CD14-positive monocyte (primary cell): ENCODE measurements at regions of chr18 and their contacts with region 1.

Region 1: GRCh38 chr18:77054606-77055428 is 77.8 kb downstream of the MBP start:
- DNase-seq: peak; percentile 94
- H3K4me3 ChIP-seq: peak overlapping the region in 2 of 3 experiments; percentile 15 to 42
- H3K4me3 Mint-ChIP-seq: peak overlapping the region; percentile 69 to 82
- H3K27ac ChIP-seq: peak overlapping the region; percentile 93 to 99
- H3K27ac Mint-ChIP-seq: peak overlapping the region; percentile 98 to 100 (median 99)
- H3K4me1 ChIP-seq: peaks cover 68 to 71% of the 10 kb centered on the region in 2 donors
- H3K4me1 Mint-ChIP-seq: peaks cover 58% of the 10 kb centered on the region
- H3K27me3 ChIP-seq: no peaks in the 10 kb centered on the region
- H3K27me3 Mint-ChIP-seq: peaks cover 0 to 2% (median 0%) of the 10 kb centered on the region in 3 donors
- CTCF ChIP-seq: peak; percentile 70

Region 2: DNA sequence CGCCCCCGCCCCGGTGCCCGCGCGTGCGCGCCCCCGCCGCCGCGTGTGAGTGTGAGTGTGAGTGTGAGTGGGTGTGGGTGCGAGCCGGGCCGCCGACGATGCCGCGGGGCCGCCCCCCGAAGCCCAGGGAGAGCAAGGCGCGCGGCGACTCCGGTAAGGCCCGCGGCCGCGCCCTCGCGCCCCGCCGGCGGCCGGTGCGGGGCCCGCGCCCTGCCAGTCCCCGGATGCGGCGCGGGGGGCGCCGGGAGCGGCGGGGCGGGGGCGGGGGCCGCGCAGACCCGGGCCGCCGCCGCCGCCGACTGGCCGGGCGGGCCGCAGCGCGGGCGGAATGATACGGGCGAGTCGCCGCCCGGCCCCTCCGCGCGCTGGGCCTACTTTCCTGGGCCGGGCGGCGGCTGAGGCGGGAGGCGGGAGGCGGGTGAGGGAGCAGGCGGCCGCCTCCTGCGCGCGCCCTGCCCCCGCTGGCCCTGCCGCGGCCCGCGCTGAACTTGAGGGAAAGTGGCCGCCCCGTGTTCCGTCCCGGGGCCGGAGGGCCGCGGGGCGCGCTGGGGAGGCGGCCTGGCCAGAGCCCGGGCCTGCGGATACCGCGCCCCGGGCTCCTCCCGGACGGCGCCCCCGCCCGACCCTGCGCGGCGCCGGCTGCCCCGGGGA is 232.2 kb before region 1 on chr18 and contains the start of gene ZNF236:
- intact Hi-C with region 1: loop called in 1 of 2 experiments (anchors 5 kb)
- DNase-seq: peak; percentile 63 to 77 (median 71)
- H3K4me3 ChIP-seq: peak within 1 kb of the TSS; percentile 85 to 95 (median 89)
- H3K4me3 Mint-ChIP-seq: peak within 1 kb of the TSS; percentile 91 to 95
- H3K27ac ChIP-seq: peak within 1 kb of the TSS; percentile 89 to 93
- H3K27ac Mint-ChIP-seq: peak within 1 kb of the TSS; percentile 91 to 98 (median 95)
- H3K4me1 ChIP-seq: peaks cover 20 to 32% of the 10 kb centered on the region in 2 donors
- H3K4me1 Mint-ChIP-seq: peaks cover 45% of the 10 kb centered on the region
- H3K27me3 ChIP-seq: no peaks in the 10 kb centered on the region
- H3K27me3 Mint-ChIP-seq: peaks cover 0 to 4% (median 0%) of the 10 kb centered on the region in 3 donors
- CTCF ChIP-seq: no peak
- polyA plus RNA-seq, gene ZNF236: 1.7 to 6.5 (median 2.4) TPM

Region 3: DNA sequence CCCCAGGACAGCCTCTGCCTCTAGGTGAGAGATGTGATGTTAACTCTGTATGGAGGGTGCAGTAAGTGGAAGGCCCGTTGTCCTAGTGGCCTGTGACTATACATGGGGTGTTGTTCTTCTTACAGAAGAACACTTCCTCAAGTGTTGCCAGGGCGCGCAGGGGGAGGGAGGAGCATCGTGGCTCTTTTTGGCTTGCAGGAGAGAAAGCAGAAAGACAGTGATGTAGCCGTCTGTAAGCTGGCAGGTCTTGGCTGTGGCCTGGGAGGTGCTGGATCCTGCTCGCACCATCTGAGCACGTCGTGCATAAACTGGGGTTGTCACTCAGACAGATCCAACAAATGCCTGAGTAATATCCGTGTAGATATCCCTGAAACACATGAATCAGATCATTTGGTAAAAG is 188.2 kb before region 1 on chr18:
- intact Hi-C with region 1: no loop called
- DNase-seq: no peak
- H3K4me3 ChIP-seq: no peak overlapping the region
- H3K4me3 Mint-ChIP-seq: no peak overlapping the region
- H3K27ac ChIP-seq: no peak overlapping the region
- H3K27ac Mint-ChIP-seq: peak overlapping the region in 1 of 7 donors; percentile 42
- H3K4me1 ChIP-seq: no peaks in the 10 kb centered on the region
- H3K4me1 Mint-ChIP-seq: no peaks in the 10 kb centered on the region
- H3K27me3 ChIP-seq: no peaks in the 10 kb centered on the region
- H3K27me3 Mint-ChIP-seq: peaks cover 0 to 2% (median 0%) of the 10 kb centered on the region in 3 donors
- CTCF ChIP-seq: no peak

Region 4: DNA sequence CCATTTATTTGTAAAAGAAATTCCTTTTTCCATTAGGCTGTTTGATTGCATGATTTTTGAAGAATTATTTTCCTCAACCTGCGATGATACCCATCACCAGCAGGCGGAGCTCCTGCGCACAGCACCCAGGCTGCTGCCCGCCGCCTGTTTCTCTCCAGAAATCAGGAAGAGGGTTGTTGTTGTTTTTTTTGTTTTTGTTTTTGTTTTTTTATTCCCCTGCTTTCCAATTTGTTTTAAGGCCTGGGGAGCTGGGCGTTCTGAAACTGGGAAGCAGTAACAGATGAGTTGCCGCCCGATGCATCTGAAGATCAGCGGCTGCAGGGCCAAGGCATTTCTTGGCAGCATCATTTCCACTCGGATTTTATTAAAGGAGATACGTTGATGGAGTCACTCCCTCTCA is 54.3 kb before region 1 on chr18:
- intact Hi-C with region 1: loop called (anchors 2 kb)
- DNase-seq: peak; percentile 54 to 73 (median 67)
- H3K4me3 ChIP-seq: no peak overlapping the region
- H3K4me3 Mint-ChIP-seq: peak overlapping the region in 1 of 2 donors; percentile 35
- H3K27ac ChIP-seq: no peak overlapping the region
- H3K27ac Mint-ChIP-seq: peak overlapping the region in 4 of 7 donors; percentile 24 to 68 (median 44)
- H3K4me1 ChIP-seq: peaks cover 26 to 31% of the 10 kb centered on the region in 2 donors
- H3K4me1 Mint-ChIP-seq: peaks cover 27% of the 10 kb centered on the region
- H3K27me3 ChIP-seq: no peaks in the 10 kb centered on the region
- H3K27me3 Mint-ChIP-seq: no peaks in the 10 kb centered on the region
- CTCF ChIP-seq: peak; percentile 97